ENCODE measurements at regions of chr4 and their contacts with region 1.

Region 1: GRCh38 chr4:77911842-77912450 is 49.3 kb downstream of the MRPL1 start:
- DNase-seq: no peak

Region 2: DNA sequence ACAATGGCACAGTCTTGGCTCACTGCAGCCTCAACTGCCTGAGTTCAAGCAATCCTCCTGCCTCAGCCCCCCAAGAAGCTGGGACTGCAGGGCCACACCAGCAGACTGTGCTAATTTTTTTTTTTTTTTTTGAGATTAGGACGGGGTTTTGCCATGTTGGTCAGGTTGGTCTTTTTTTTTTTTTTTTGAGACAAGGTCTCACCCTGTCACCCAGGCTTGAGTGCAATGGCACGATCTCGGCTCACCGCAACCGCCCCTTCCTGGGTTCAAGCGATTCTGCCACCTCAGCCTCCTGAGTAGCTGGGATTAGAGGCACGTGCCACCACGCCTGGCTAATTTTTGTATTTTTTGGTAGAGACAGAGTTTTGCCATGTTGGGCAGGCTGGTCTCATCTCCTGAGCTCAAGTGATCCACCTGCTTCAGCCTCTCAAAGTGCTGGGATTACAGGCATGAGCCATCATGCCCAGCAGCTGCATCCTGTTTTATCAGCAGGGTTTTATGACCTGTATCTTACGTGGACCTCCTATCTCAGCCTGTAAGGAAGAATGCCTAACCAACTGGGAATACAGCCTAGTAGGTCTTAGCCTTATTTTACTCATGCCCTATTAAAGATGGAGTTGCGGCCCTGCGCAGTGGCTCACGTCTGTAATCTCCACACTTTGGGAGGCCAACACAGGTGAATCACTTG is 62.5 kb before region 1 on chr4:
- intact Hi-C with region 1: no loop called
- DNase-seq: no peak

Region 3: DNA sequence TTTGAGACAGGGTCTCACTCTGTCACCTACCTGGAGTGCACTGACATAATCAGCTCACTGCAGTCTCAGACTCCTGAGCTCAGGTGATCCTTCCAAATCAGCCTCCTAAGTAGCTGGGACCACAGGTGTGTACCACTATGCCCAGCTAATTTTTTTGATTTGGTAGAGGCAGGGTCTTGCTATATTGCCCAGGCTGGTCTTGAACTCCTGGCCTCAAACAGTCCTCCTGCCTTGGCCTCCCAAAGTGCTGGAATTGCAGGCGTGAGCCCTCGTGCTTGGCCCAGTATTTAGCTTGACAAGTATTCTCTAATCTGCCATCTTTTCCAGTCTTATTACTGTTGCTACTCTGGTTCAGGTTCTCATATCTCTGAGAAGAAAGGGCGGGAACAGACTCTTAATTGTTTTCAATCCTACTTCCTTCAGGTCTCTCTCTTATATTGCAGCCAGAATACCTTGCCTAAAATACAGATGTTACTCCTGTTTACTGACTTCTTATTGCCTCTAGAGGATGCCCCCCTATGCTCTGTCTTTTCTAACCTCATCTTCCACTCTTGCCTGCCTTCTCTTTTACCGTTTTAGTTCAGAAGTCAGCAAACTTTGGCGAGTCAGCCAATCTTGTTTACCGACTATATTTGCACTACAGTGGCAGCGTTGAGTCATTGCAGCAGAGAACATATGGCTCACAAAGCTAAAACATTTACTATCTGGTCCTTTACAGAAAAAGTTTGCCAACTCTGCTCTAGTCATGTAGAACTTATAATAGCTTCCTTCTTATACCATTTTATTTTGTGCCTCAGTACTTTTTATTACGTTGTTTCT is 30.3 kb before region 1 on chr4:
- intact Hi-C with region 1: loop called (anchors 2 kb)
- DNase-seq: no peak

Measured in posterior cingulate gyrus (tissue), 11 donors.